Sciatic nerve (tissue), 2 donors: ENCODE measurements at regions of chr3 and their contacts with region 1.

Region 1: DNA sequence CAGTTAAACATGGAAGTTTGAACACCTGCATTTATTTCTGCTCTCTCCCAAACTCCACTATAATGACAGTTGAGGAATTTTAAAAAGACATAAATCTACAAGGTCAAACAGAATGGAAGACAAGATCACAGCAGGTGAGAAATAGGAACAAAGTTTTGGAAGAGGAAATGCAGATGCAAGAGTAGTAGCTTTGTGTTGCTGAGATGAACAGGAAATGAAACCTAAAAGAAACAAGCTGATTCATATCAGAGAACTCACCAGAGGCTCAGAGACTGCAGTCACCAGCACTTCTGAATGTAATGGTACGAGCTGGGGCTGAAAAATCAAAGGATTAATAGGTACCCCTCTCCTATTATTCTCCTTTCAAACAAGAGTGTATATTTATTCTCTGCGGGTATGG is 459.9 kb downstream of the RAP2B start:
- DNase-seq: no peak
- ATAC-seq: no peak

Region 2: GRCh38 chr3:153835540-153835939 is 213.6 kb after region 1 on chr3:
- intact Hi-C with region 1: no loop called
- DNase-seq: no peak
- ATAC-seq: no peak

Region 3: DNA sequence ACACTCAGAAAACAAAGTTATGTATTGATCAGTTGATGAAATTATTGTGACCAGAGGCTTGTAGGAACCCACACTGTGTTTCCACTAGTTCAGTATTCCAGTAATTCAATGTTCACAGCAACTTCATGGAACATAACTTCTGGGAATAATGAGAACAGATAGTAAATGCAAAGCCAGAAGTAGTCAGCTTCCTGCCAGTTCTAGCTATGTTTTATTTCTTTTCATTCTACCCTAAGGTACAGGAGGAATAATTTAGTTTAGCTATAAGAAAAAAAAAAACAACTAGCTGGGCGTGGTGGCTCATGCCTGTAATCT is 547.8 kb after region 1 on chr3:
- intact Hi-C with region 1: loop called (anchors 5 kb)
- DNase-seq: no peak
- ATAC-seq: no peak